Heart left ventricle (tissue), 16 donors: ENCODE measurements at regions of chrX and their contacts with region 1.

Region 1: GRCh38 chrX:3548765-3549391 is 164.6 kb downstream of the PRKX start:
- DNase-seq: peak in 2 of 5 donors; percentile 18 to 24
- ATAC-seq: peak in 2 of 4 donors; percentile 61 to 62
- H3K4me3 ChIP-seq: peak overlapping the region in 9 of 12 donors; percentile 15 to 53 (median 32)
- H3K27ac ChIP-seq: peak overlapping the region in 5 of 12 donors; percentile 24 to 57 (median 34)
- H3K4me1 ChIP-seq: peaks cover 0 to 11% (median 0%) of the 10 kb centered on the region in 12 donors
- H3K27me3 ChIP-seq: no peaks in the 10 kb centered on the region
- CTCF ChIP-seq: peak in 10 of 12 donors; percentile 28 to 51 (median 43)
- POLR2A ChIP-seq: no peak

Region 2: DNA sequence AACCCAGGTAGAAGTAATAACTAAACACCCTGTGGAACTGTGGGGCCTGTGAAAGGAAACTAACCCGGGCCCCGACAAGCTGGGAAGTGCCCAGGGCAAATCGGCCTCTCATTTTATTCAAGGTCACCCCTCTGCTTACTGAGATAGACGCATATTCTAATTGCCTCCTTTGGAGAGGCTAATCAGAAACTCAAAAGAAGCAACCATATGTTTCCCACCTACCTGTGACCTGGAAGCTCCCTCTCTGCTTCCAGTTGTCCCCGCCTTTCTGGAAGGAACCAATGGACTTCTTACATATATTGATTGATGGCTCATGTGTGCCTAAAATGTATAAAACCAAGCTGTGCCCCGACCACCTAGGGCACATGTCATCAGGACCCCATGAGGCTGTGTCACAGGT is 1025.0 kb before region 1 on chrX:
- intact Hi-C with region 1: loop called in 1 of 10 experiments (anchors 2 kb)
- DNase-seq: no peak
- ATAC-seq: no peak
- H3K4me3 ChIP-seq: no peak overlapping the region
- H3K27ac ChIP-seq: no peak overlapping the region
- H3K4me1 ChIP-seq: peaks cover 0 to 8% (median 0%) of the 10 kb centered on the region in 12 donors
- H3K27me3 ChIP-seq: peaks cover 0 to 7% (median 0%) of the 10 kb centered on the region in 9 donors
- CTCF ChIP-seq: no peak
- POLR2A ChIP-seq: no peak

Region 3: GRCh38 chrX:3119376-3119775 is 429.5 kb before region 1 on chrX:
- intact Hi-C with region 1: loop called in 2 of 10 experiments (anchors 2 to 10 kb)
- DNase-seq: no peak
- ATAC-seq: no peak
- H3K4me3 ChIP-seq: no peak overlapping the region
- H3K27ac ChIP-seq: no peak overlapping the region
- H3K4me1 ChIP-seq: no peaks in the 10 kb centered on the region
- H3K27me3 ChIP-seq: no peaks in the 10 kb centered on the region
- CTCF ChIP-seq: no peak
- POLR2A ChIP-seq: no peak

Region 4: DNA sequence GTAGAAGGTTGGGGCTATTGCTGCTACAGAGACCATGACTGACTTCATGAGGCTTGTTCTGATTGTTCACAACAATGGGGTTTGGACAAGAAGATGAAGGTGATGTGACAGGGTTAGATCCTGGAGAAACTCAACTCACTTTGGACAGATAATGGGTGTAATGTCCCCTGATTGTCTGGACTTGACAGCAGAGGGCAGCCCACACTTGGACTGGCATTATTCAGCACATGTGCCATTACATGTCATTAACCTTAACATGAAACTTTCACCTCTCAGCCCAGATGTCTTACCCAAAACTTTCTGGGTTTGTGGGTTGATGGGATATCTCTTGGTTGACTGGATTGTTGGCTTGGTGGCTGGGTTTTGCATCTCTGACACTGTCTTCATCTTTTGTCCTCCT is 303.9 kb before region 1 on chrX:
- intact Hi-C with region 1: loop called in 5 of 10 experiments (anchors 2 to 10 kb)
- DNase-seq: no peak
- ATAC-seq: no peak
- H3K4me3 ChIP-seq: no peak overlapping the region
- H3K27ac ChIP-seq: no peak overlapping the region
- H3K4me1 ChIP-seq: no peaks in the 10 kb centered on the region
- H3K27me3 ChIP-seq: no peaks in the 10 kb centered on the region
- CTCF ChIP-seq: peak in 8 of 12 donors; percentile 9 to 35 (median 24)
- POLR2A ChIP-seq: no peak

Region 5: DNA sequence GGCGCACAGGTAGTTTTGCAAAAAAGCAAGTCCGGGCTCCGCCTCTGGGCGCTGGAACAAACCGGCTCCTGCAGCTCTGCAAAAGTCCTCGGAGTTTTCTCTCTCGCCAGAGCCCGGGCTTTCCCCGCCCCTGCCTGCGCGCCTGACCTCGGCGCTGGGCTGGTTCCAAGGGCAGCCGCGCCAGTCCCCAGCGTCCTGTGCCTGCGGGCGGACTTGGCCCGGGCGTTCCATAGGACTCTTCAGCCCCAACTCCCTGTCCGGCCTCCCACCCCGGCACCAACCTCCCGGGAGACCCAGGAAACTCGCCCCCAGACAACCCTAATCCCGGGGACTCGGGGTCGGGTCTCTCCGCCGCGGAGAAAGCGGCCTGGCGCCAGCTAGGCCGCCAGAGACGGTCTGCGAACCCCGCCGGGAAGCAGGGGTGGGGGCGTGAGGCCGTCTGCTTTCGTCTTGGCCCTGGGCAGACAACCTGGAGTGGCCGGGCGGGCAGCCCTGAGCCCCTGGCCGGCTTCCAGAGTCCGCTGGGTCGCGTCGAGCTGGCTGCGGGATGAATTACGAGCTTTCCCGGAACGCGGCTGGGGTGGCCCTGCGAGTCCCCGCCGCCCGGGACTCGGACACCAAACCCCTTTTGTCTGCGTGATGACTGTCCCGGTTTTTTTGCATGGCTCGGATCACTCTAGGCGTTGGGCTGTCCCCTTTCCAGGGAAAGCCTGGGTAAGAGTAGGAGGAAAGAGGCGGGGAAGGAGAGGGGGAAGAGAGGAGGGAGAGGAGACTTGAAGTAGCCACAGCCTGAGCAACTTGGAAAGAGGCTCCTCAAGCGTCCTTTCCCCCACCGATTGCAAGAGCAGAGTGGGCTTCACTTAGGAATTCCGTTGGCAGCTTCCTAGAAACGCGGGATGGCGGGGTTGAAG is 203.3 kb before region 1 on chrX:
- intact Hi-C with region 1: loop called in 3 of 10 experiments (anchors 5 to 10 kb)
- DNase-seq: peak; percentile 48 to 80 (median 66)
- ATAC-seq: peak; percentile 32 to 91 (median 85)
- H3K4me3 ChIP-seq: peak overlapping the region; percentile 17 to 69 (median 53)
- H3K27ac ChIP-seq: peak overlapping the region; percentile 51 to 96 (median 71)
- H3K4me1 ChIP-seq: peaks cover 0 to 21% (median 0%) of the 10 kb centered on the region in 12 donors
- H3K27me3 ChIP-seq: peaks cover 0 to 39% (median 10%) of the 10 kb centered on the region in 9 donors
- CTCF ChIP-seq: no peak
- POLR2A ChIP-seq: no peak

Region 6: GRCh38 chrX:3425031-3425430 is 123.8 kb before region 1 on chrX:
- intact Hi-C with region 1: no loop called
- DNase-seq: no peak
- ATAC-seq: no peak
- H3K4me3 ChIP-seq: no peak overlapping the region
- H3K27ac ChIP-seq: no peak overlapping the region
- H3K4me1 ChIP-seq: no peaks in the 10 kb centered on the region
- H3K27me3 ChIP-seq: no peaks in the 10 kb centered on the region
- CTCF ChIP-seq: no peak
- POLR2A ChIP-seq: no peak